ENCODE measurements at regions of chr11 and their contacts with region 1.

Region 1: GRCh38 chr11:1598816-1599215 is 722 bp upstream of the KRTAP5-2 start:
- DNase-seq: no peak
- H3K4me3 ChIP-seq: no peak overlapping the region
- H3K27ac ChIP-seq: no peak overlapping the region
- H3K4me1 ChIP-seq: peaks cover 2 to 13% (median 5%) of the 10 kb centered on the region in 4 experiments
- H3K27me3 ChIP-seq: peaks cover 0 to 4% (median 0%) of the 10 kb centered on the region in 4 experiments; a peak in 1 of 7 replicates
- CTCF ChIP-seq: no peak
- EP300 ChIP-seq: no peak
- POLR2A ChIP-seq: no peak
- RAD21 ChIP-seq: no peak

Region 2: DNA sequence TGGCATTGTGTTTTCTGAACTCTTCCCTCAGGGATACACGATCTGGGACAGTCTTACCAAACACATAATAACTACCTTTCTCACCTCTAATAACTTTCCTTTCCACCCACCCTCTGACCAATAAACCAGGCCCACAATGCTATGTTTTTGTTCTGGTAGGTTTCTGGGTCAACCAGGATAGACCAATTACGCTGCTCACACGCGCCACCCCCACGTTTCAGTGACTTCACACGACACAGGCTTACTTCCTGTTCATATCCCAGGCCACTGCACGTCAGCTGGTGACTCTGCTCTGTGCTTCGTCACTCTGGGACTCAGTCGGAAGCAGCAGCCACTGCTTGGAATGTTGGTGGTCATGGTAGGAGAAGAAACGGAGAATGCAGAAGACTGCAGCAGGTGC is 20.6 kb after region 1 on chr11:
- CTCF ChIA-PET with region 1: interaction called, 22 read pairs
- POLR2A ChIA-PET with region 1: no interaction called
- DNase-seq: no peak
- H3K4me3 ChIP-seq: no peak overlapping the region
- H3K27ac ChIP-seq: no peak overlapping the region
- H3K4me1 ChIP-seq: no peaks in the 10 kb centered on the region; a peak in 1 of 7 replicates
- H3K27me3 ChIP-seq: no peaks in the 10 kb centered on the region
- CTCF ChIP-seq: no peak
- EP300 ChIP-seq: no peak
- POLR2A ChIP-seq: no peak
- RAD21 ChIP-seq: no peak

Region 3: GRCh38 chr11:1628506-1629325 is 29.9 kb after region 1 on chr11:
- CTCF ChIA-PET with region 1: interaction called, 43 read pairs
- POLR2A ChIA-PET with region 1: interaction called, 5 read pairs
- DNase-seq: peak; percentile 46 to 93
- H3K4me3 ChIP-seq: no peak overlapping the region
- H3K27ac ChIP-seq: no peak overlapping the region
- H3K4me1 ChIP-seq: peaks cover 0 to 4% (median 1%) of the 10 kb centered on the region in 4 experiments; a peak in 5 of 7 replicates
- H3K27me3 ChIP-seq: peaks cover 0 to 16% (median 3%) of the 10 kb centered on the region in 4 experiments; a peak in 5 of 7 replicates
- CTCF ChIP-seq: peak; percentile 90 to 100 (median 98)
- EP300 ChIP-seq: no peak
- POLR2A ChIP-seq: no peak
- RAD21 ChIP-seq: peak; percentile 58 to 71

Region 4: GRCh38 chr11:1640076-1640946 is 41.5 kb after region 1 on chr11:
- CTCF ChIA-PET with region 1: interaction called, 43 read pairs
- POLR2A ChIA-PET with region 1: no interaction called
- DNase-seq: peak; percentile 58 to 87
- H3K4me3 ChIP-seq: no peak overlapping the region
- H3K27ac ChIP-seq: no peak overlapping the region
- H3K4me1 ChIP-seq: no peaks in the 10 kb centered on the region; a peak in 1 of 7 replicates
- H3K27me3 ChIP-seq: no peaks in the 10 kb centered on the region; a peak in 1 of 7 replicates
- CTCF ChIP-seq: peak; percentile 86 to 92 (median 89)
- EP300 ChIP-seq: no peak
- POLR2A ChIP-seq: no peak
- RAD21 ChIP-seq: peak; percentile 42 to 60; a peak in 3 of 4 replicates

Region 5: GRCh38 chr11:1705126-1706052 is 106.6 kb after region 1 on chr11:
- CTCF ChIA-PET with region 1: no interaction called
- POLR2A ChIA-PET with region 1: no interaction called
- DNase-seq: no peak
- H3K4me3 ChIP-seq: no peak overlapping the region
- H3K27ac ChIP-seq: no peak overlapping the region
- H3K4me1 ChIP-seq: peaks cover 0 to 5% (median 3%) of the 10 kb centered on the region in 4 experiments; a peak in 2 of 7 replicates
- H3K27me3 ChIP-seq: peaks cover 0 to 5% (median 2%) of the 10 kb centered on the region in 4 experiments; a peak in 1 of 7 replicates
- CTCF ChIP-seq: no peak
- EP300 ChIP-seq: no peak
- POLR2A ChIP-seq: no peak
- RAD21 ChIP-seq: no peak